ENCODE measurements at regions of chr6 and their contacts with region 1.

Region 1: GRCh38 chr6:44338228-44339122 is 4.0 kb upstream of the SPATS1 start:
- DNase-seq: peak; percentile 33 to 60
- ATAC-seq: peak; percentile 89 to 92
- H3K4me3 ChIP-seq: no peak overlapping the region
- H3K27ac ChIP-seq: no peak overlapping the region
- H3K4me1 ChIP-seq: no peaks in the 10 kb centered on the region
- CTCF ChIP-seq: peak; percentile 74
- EP300 ChIP-seq: no peak
- POLR2A ChIP-seq: no peak
- RAD21 ChIP-seq: peak; percentile 79 to 87

Region 2: GRCh38 chr6:43972913-43973300 is 365.6 kb before region 1 on chr6:
- CTCF ChIA-PET with region 1: no interaction called
- POLR2A ChIA-PET with region 1: no interaction called
- DNase-seq: no peak
- ATAC-seq: no peak
- H3K4me3 ChIP-seq: no peak overlapping the region
- H3K27ac ChIP-seq: no peak overlapping the region; a peak in 1 of 6 replicates
- H3K4me1 ChIP-seq: peaks cover 9% of the 10 kb centered on the region; the same call in 1 of the 3 replicates
- CTCF ChIP-seq: no peak
- EP300 ChIP-seq: no peak
- POLR2A ChIP-seq: no peak
- RAD21 ChIP-seq: no peak

Region 3: GRCh38 chr6:44275749-44276648 is 62.5 kb before region 1 on chr6:
- CTCF ChIA-PET with region 1: interaction called, 181 read pairs
- POLR2A ChIA-PET with region 1: no interaction called
- DNase-seq: no peak
- ATAC-seq: no peak
- H3K4me3 ChIP-seq: no peak overlapping the region
- H3K27ac ChIP-seq: no peak overlapping the region
- H3K4me1 ChIP-seq: no peaks in the 10 kb centered on the region
- CTCF ChIP-seq: no peak
- EP300 ChIP-seq: no peak
- POLR2A ChIP-seq: no peak
- RAD21 ChIP-seq: no peak

Region 4: GRCh38 chr6:44304282-44305199 is 33.9 kb before region 1 on chr6:
- CTCF ChIA-PET with region 1: interaction called, 23 read pairs
- POLR2A ChIA-PET with region 1: no interaction called
- DNase-seq: peak; percentile 35 to 42
- ATAC-seq: peak; percentile 56 to 85; a peak in 4 of 6 replicates
- H3K4me3 ChIP-seq: no peak overlapping the region
- H3K27ac ChIP-seq: no peak overlapping the region
- H3K4me1 ChIP-seq: no peaks in the 10 kb centered on the region
- CTCF ChIP-seq: peak; percentile 39; the same call in 2 of the 3 replicates
- EP300 ChIP-seq: no peak
- POLR2A ChIP-seq: no peak
- RAD21 ChIP-seq: no peak; a peak in 1 of 5 replicates

Region 5: GRCh38 chr6:44327096-44327495 is 11.4 kb before region 1 on chr6:
- CTCF ChIA-PET with region 1: interaction called, 38 read pairs
- POLR2A ChIA-PET with region 1: no interaction called
- DNase-seq: no peak
- ATAC-seq: no peak
- H3K4me3 ChIP-seq: no peak overlapping the region
- H3K27ac ChIP-seq: no peak overlapping the region
- H3K4me1 ChIP-seq: no peaks in the 10 kb centered on the region
- CTCF ChIP-seq: no peak
- EP300 ChIP-seq: no peak
- POLR2A ChIP-seq: no peak
- RAD21 ChIP-seq: no peak